CD8-positive, alpha-beta memory T cell (primary cell): ENCODE measurements at regions of chr7 and their contacts with region 1.

Region 1: GRCh38 chr7:128398016-128398840 is 11.6 kb downstream of the IMPDH1 start:
- DNase-seq: peak; percentile 27 to 68 (median 28)
- H3K4me3 ChIP-seq: no peak overlapping the region
- H3K4me3 Mint-ChIP-seq: no peak overlapping the region
- H3K27ac ChIP-seq: no peak overlapping the region
- H3K27ac Mint-ChIP-seq: peak overlapping the region in 1 of 8 donors; percentile 47
- H3K4me1 ChIP-seq: no peaks in the 10 kb centered on the region
- H3K4me1 Mint-ChIP-seq: peaks cover 0 to 7% (median 0%) of the 10 kb centered on the region in 3 donors
- H3K27me3 ChIP-seq: no peaks in the 10 kb centered on the region
- H3K27me3 Mint-ChIP-seq: no peaks in the 10 kb centered on the region

Region 2: GRCh38 chr7:128335734-128336133 is 62.5 kb before region 1 on chr7:
- CTCF ChIA-PET with region 1: no interaction called
- POLR2A ChIA-PET with region 1: no interaction called
- DNase-seq: no peak
- H3K4me3 ChIP-seq: no peak overlapping the region
- H3K4me3 Mint-ChIP-seq: no peak overlapping the region
- H3K27ac ChIP-seq: no peak overlapping the region
- H3K27ac Mint-ChIP-seq: peak overlapping the region in 1 of 8 donors; percentile 59
- H3K4me1 ChIP-seq: peaks cover 2% of the 10 kb centered on the region
- H3K4me1 Mint-ChIP-seq: peaks cover 2 to 11% (median 8%) of the 10 kb centered on the region in 3 donors
- H3K27me3 ChIP-seq: no peaks in the 10 kb centered on the region
- H3K27me3 Mint-ChIP-seq: no peaks in the 10 kb centered on the region

Region 3: DNA sequence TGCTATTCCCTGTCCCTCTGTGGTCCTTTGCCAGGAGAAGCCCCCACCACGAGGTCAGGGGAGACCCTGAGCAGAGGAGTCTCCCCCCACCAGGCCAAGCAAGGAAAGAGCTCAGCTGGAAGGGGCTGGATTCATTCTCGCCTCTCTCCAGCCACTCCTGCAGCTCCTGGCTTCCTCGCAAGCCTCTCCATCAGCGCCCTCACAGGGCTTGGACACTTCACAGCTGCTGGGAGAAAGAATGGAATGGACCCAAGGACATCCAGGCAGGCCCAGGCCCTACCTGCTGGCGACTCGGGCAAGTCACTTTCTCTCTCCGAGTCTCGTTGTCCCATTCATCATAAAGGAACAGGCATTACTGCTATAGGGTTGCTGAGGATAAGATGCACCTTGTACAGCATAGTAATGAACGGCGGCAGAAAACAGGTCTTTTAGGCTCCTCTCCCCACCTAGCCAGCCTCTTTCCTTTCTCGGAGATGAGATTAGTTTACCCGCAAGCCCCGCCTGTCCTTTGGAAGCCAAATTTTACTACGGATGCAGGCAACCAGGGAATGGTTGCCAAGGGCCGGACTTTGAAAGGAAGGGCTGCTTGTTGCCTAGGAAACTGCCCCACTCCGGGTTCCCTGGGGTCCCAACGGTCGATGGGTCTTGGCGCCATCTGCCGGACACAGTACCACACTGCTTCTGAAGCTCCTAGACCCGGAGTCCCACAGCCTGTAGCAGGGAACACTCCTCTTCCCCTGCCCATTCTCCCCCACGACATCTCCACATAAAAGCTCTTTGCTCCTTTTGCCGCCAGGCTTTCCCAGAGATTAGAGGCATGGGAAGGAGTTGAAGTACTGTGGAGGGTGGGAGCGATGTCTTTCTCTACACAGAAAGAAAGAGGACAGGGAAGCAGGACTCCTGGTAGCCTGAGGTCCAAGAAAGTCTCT is 10.7 kb before region 1 on chr7:
- CTCF ChIA-PET with region 1: interaction called, 26 read pairs
- POLR2A ChIA-PET with region 1: interaction called, 4 read pairs
- DNase-seq: peak; percentile 42 to 69 (median 52)
- H3K4me3 ChIP-seq: no peak overlapping the region
- H3K4me3 Mint-ChIP-seq: no peak overlapping the region
- H3K27ac ChIP-seq: no peak overlapping the region
- H3K27ac Mint-ChIP-seq: peak overlapping the region in 1 of 8 donors; percentile 24
- H3K4me1 ChIP-seq: no peaks in the 10 kb centered on the region
- H3K4me1 Mint-ChIP-seq: peaks cover 0 to 4% (median 0%) of the 10 kb centered on the region in 3 donors
- H3K27me3 ChIP-seq: no peaks in the 10 kb centered on the region
- H3K27me3 Mint-ChIP-seq: no peaks in the 10 kb centered on the region

Region 4: GRCh38 chr7:128409596-128410160 is 11.4 kb after region 1 on chr7 and contains the start of gene IMPDH1:
- CTCF ChIA-PET with region 1: interaction called, 16 read pairs
- POLR2A ChIA-PET with region 1: no interaction called
- DNase-seq: peak; percentile 82 to 87 (median 84)
- H3K4me3 ChIP-seq: peak within 1 kb of the TSS; percentile 94
- H3K4me3 Mint-ChIP-seq: peak within 1 kb of the TSS; percentile 88 to 97 (median 93)
- H3K27ac ChIP-seq: peak within 1 kb of the TSS; percentile 75
- H3K27ac Mint-ChIP-seq: peak within 1 kb of the TSS; percentile 84 to 98 (median 90)
- H3K4me1 ChIP-seq: peaks cover 34% of the 10 kb centered on the region
- H3K4me1 Mint-ChIP-seq: peaks cover 27 to 42% (median 34%) of the 10 kb centered on the region in 3 donors
- H3K27me3 ChIP-seq: no peaks in the 10 kb centered on the region
- H3K27me3 Mint-ChIP-seq: no peaks in the 10 kb centered on the region
- total RNA-seq, gene IMPDH1: 69.1 to 70.4 TPM

Region 5: DNA sequence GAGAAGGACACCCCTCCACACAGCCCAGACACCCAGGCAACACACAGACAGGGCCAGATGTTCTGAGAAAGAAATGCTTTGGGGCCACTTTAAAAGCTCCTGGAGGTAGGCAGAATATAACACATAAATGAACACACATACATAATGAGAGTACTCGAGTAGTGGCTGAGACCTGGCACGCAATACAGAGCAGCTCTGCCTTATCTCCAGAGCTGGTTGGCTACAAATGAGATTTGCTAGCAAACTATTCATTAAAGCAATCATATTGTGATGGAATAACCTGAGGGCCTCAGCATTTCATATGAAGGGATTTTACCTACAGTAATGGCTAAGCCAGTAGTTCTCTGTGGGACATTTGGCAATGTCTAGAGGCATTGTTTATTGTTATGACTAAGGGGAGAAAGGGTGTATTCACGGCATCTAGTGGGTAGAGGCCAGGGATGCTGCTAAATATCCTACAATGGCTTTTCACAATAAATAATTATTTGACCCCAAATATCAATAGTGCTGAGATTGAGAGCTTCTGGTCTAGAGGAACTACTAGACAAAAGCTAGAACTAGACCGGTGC is 17.1 kb after region 1 on chr7:
- CTCF ChIA-PET with region 1: interaction called, 15 read pairs
- POLR2A ChIA-PET with region 1: no interaction called
- DNase-seq: no peak
- H3K4me3 ChIP-seq: no peak overlapping the region
- H3K4me3 Mint-ChIP-seq: no peak overlapping the region
- H3K27ac ChIP-seq: no peak overlapping the region
- H3K27ac Mint-ChIP-seq: no peak overlapping the region
- H3K4me1 ChIP-seq: peaks cover 3% of the 10 kb centered on the region
- H3K4me1 Mint-ChIP-seq: peaks cover 2 to 3% (median 3%) of the 10 kb centered on the region in 3 donors
- H3K27me3 ChIP-seq: no peaks in the 10 kb centered on the region
- H3K27me3 Mint-ChIP-seq: peaks cover 2 to 3% of the 10 kb centered on the region in 2 donors

Region 6: GRCh38 chr7:128425850-128426249 is 27.6 kb after region 1 on chr7:
- CTCF ChIA-PET with region 1: interaction called, 136 read pairs
- POLR2A ChIA-PET with region 1: no interaction called
- DNase-seq: peak; percentile 59 to 81 (median 73)
- H3K4me3 ChIP-seq: no peak overlapping the region
- H3K4me3 Mint-ChIP-seq: no peak overlapping the region
- H3K27ac ChIP-seq: no peak overlapping the region
- H3K27ac Mint-ChIP-seq: peak overlapping the region in 1 of 8 donors; percentile 25
- H3K4me1 ChIP-seq: peaks cover 4% of the 10 kb centered on the region
- H3K4me1 Mint-ChIP-seq: peaks cover 11 to 20% (median 19%) of the 10 kb centered on the region in 3 donors
- H3K27me3 ChIP-seq: no peaks in the 10 kb centered on the region
- H3K27me3 Mint-ChIP-seq: peaks cover 8 to 15% of the 10 kb centered on the region in 2 donors

Region 7: DNA sequence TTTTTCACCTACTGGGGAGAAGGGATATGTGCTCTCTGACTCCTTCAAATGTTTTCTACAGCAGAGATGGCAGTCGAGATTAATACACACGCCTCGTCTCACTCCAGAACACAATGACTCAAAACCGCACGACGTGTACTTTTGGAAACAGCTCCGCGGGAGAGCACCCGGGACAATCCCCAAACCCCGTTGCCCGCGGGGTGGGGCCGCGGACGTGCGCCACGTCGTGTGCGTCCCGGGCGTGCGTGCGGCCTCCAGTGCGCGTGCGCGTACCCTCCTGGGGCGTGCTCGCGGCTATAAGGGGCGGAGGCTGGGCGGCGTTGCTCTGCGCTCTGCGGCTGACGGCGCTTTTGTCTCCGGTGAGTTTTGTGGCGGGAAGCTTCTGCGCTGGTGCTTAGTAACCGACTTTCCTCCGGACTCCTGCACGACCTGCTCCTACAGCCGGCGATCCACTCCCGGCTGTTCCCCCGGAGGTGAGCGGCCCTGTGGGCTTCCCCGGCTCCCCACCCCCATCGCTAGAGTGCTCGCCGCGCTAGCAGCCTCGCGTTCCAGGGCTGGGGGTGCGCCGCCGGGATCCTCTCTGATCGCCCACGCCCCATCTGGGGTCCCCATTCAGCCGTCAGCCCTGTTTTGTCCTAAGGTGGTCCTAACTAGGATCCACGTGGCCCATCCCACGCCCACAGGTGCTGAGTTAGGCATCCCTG is 57.5 kb after region 1 on chr7 and contains the start of gene HILPDA:
- CTCF ChIA-PET with region 1: interaction called, 33 read pairs
- POLR2A ChIA-PET with region 1: no interaction called
- DNase-seq: peak; percentile 91 to 95 (median 92)
- H3K4me3 ChIP-seq: peak within 1 kb of the TSS; percentile 90
- H3K4me3 Mint-ChIP-seq: peak within 1 kb of the TSS; percentile 90 to 95 (median 92)
- H3K27ac ChIP-seq: peak within 1 kb of the TSS; percentile 93
- H3K27ac Mint-ChIP-seq: peak within 1 kb of the TSS; percentile 73 to 98 (median 96)
- H3K4me1 ChIP-seq: peaks cover 21% of the 10 kb centered on the region
- H3K4me1 Mint-ChIP-seq: peaks cover 20 to 31% (median 31%) of the 10 kb centered on the region in 3 donors
- H3K27me3 ChIP-seq: no peaks in the 10 kb centered on the region
- H3K27me3 Mint-ChIP-seq: peaks cover 5 to 9% of the 10 kb centered on the region in 2 donors
- total RNA-seq, gene HILPDA: 16.7 to 17.5 TPM